Right lobe of liver (tissue), 6 donors: ENCODE measurements at regions of chr3 and their contacts with region 1.

Region 1: DNA sequence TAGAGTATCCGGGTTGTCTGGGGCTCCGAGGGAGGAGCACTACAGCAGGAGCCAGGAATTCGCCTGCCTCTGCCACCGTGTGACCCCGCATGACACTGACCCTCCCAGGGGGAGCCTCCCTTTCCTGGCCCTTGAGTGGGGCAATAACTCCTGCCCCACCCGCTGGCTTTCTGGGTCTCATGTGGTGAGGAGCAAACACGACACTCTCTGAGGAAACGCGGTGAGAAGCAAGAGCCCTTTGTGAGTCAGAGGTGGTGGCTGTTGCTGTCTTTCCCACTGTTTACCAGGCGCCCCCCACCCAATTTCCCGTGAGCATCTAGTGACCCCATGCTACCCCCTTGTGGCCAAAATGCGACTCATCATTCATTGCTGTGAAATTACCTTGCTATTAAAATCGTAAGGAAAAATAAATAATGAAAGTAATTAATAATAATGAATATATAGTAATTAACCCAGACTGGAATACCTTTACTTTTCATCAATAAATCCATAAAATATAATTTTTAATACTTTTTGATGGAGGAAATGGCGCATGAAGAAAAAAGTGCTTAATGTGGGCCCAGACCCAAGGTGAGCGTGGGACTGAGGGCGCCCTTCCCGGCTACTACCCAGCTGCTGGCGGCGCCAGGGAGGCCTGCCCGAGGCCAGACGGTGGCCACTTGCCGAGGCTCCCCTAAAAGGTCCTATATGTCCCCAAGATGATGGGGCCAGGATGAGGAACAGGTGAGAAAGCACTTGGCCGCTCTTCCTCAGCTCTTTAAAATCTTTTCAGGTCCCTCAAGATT is 29.3 kb downstream of the CCNL1 start:
- DNase-seq: no peak
- ATAC-seq: peak in 1 of 4 donors; percentile 0
- H3K4me3 ChIP-seq: no peak overlapping the region
- H3K27ac ChIP-seq: peak overlapping the region; percentile 51 to 57 (median 55)
- H3K4me1 ChIP-seq: peaks cover 3 to 69% (median 32%) of the 10 kb centered on the region in 4 donors
- H3K27me3 ChIP-seq: no peaks in the 10 kb centered on the region
- CTCF ChIP-seq: peak; percentile 47 to 57 (median 51)
- POLR2A ChIP-seq: no peak

Region 2: DNA sequence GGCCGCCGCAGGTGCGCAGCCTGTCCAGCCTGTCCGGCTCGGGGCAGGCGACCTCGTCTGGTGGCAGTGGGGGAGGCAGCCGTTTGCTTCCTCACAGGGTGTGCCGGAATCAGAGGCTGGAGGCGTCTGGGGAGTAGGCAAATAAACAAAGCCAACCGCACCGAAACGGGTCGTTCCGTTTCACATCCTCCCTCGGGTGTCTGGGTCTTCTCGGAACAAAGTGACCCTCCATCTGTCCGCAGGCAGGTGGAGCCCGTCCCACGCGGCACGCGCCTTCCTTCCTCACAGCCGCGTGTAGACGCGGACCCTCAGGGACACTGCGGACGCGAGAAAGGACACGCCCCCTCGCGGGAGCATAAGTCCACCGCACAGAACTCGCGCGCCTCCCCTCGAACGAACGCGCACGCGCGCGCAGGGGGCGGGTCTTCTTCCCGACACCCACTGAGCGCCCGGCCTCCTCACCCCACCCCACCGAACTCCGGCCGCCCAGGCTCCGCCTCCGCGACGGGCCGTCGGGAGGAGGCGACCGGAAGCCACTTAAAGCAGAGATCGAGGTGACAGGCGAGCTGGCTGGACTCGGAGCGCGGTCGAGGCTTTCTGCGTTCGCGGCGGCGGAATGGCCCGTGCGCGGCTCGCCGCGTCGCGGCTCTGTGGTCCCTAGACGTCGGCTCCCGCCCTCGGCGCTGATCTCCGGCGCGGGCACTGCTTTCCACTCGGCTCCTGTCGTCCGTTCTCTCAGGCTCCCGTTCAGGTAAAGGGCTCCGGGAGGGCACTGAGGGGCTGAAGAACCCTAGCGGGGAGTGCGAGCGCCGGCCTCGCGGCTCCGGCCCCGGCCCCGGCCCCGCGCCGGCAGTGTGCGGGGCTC is 456.4 kb before region 1 on chr3 and contains the start of gene TIPARP:
- intact Hi-C with region 1: loop called in 1 of 2 experiments (anchors 10 kb)
- DNase-seq: peak; percentile 100
- ATAC-seq: peak; percentile 92 to 96 (median 93)
- H3K4me3 ChIP-seq: peak within 1 kb of the TSS; percentile 72 to 89 (median 78)
- H3K27ac ChIP-seq: peak within 1 kb of the TSS; percentile 92 to 94 (median 93)
- H3K4me1 ChIP-seq: peaks cover 0 to 20% (median 7%) of the 10 kb centered on the region in 4 donors
- H3K27me3 ChIP-seq: no peaks in the 10 kb centered on the region
- CTCF ChIP-seq: peak; percentile 64 to 80 (median 71)
- POLR2A ChIP-seq: peak; percentile 100
- total RNA-seq, gene TIPARP: 10.2 to 19.5 (median 16.4) TPM

Region 3: GRCh38 chr3:156826144-156826895 is 304.3 kb before region 1 on chr3 and contains the start of gene LEKR1:
- intact Hi-C with region 1: loop called in 1 of 2 experiments (anchors 10 kb)
- DNase-seq: peak; percentile 89 to 95 (median 89)
- ATAC-seq: peak; percentile 90 to 97 (median 96)
- H3K4me3 ChIP-seq: peak within 1 kb of the TSS; percentile 63 to 78 (median 67)
- H3K27ac ChIP-seq: peak within 1 kb of the TSS; percentile 95 to 97 (median 95)
- H3K4me1 ChIP-seq: peaks cover 0 to 9% (median 3%) of the 10 kb centered on the region in 4 donors
- H3K27me3 ChIP-seq: no peaks in the 10 kb centered on the region
- CTCF ChIP-seq: peak in 1 of 4 donors; percentile 8
- POLR2A ChIP-seq: peak; percentile 85
- total RNA-seq, gene LEKR1: 0.49 to 1.4 (median 0.74) TPM in 4 of 6 experiments, not detected in the others

Region 4: DNA sequence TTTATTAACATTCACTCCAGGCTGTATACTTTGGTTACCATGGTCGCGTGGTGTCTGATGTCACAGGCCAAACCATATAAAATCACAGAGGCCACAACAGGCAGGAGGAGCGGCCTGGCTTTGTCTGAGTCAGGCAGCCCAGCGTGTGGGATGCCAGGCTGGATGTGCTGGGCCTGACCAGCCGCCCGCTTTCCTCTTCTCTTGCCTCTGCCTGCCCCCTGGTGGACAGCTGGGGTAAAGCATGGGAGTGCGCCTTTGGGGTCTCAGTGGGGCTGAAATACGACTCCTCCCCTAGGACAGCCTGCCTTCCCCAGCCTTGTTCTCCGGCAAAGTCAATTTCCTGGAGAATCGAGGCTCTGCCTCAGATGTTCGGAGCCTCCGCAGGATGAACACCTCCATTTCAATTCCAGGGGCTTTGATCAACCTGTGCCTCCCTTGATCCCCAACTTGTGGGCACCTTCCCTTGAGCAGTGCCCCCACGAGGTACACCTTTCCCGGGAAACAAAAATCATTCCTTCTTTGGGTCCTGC is 48.9 kb before region 1 on chr3:
- intact Hi-C with region 1: loop called (anchors 10 kb)
- DNase-seq: peak; percentile 87 to 91 (median 89)
- ATAC-seq: peak; percentile 95 to 98 (median 96)
- H3K4me3 ChIP-seq: no peak overlapping the region
- H3K27ac ChIP-seq: peak overlapping the region; percentile 15 to 72 (median 71)
- H3K4me1 ChIP-seq: peaks cover 0 to 16% (median 6%) of the 10 kb centered on the region in 4 donors
- H3K27me3 ChIP-seq: no peaks in the 10 kb centered on the region
- CTCF ChIP-seq: peak; percentile 93 to 99 (median 96)
- POLR2A ChIP-seq: no peak

Region 5: DNA sequence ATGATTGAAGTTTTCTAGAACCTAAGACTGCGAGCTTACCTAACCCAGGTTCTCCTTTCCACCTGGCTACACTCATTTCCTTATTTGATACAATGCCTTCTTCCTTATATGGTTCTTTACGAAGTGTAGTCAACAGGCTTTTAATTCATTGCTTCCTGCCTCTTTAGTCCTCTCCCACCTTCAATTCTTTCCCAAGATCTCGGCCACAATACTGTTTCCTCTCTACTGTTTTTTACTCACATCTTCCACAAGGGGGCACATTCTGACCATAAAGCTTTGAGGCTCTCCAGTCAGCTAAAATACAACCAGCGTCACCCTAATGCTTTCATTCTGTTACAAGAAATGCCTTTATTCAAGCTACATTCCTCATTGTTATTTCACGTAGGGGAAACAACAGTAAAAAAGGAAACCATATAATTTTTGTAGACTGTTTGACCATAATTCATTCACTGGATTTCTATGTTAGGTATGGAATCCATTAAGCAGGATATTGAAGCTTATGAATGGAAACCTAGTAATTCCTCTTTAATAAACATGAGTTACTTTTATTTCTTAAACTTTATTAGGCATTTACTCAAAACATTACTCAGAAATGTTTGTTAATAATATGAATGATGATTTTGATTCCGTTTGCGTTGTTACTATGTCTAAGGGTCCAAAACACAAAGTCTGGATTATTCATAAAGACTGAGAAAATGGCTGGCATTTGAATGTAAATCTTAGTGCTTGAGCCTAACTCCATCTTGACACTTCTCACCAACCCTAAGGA is 402.1 kb after region 1 on chr3:
- intact Hi-C with region 1: no loop called
- DNase-seq: no peak
- ATAC-seq: peak; percentile 80 to 91 (median 85)
- H3K4me3 ChIP-seq: no peak overlapping the region
- H3K27ac ChIP-seq: no peak overlapping the region
- H3K4me1 ChIP-seq: no peaks in the 10 kb centered on the region
- H3K27me3 ChIP-seq: no peaks in the 10 kb centered on the region
- CTCF ChIP-seq: peak; percentile 53 to 68 (median 60)
- POLR2A ChIP-seq: no peak

Region 6: GRCh38 chr3:157931517-157931916 is 800.9 kb after region 1 on chr3:
- intact Hi-C with region 1: no loop called
- DNase-seq: no peak
- ATAC-seq: no peak
- H3K4me3 ChIP-seq: no peak overlapping the region
- H3K27ac ChIP-seq: no peak overlapping the region
- H3K4me1 ChIP-seq: no peaks in the 10 kb centered on the region
- H3K27me3 ChIP-seq: no peaks in the 10 kb centered on the region
- CTCF ChIP-seq: no peak
- POLR2A ChIP-seq: no peak